ENCODE measurements at regions of chr10 and their contacts with region 1.

Region 1: GRCh38 chr10:110746254-110746826 is 102.2 kb downstream of the RBM20 start:
- DNase-seq: peak; percentile 39
- ATAC-seq: peak; percentile 75
- H3K4me3 Mint-ChIP-seq: no peak overlapping the region
- H3K27ac Mint-ChIP-seq: no peak overlapping the region
- H3K4me1 Mint-ChIP-seq: peaks cover 7% of the 10 kb centered on the region
- H3K27me3 Mint-ChIP-seq: peaks cover 5% of the 10 kb centered on the region
- CTCF ChIP-seq: peak; percentile 40

Region 2: GRCh38 chr10:110871298-110872084 is 125.2 kb after region 1 on chr10 and contains the start of gene PDCD4:
- CTCF ChIA-PET with region 1: interaction called, 3 read pairs
- POLR2A ChIA-PET with region 1: no interaction called
- intact Hi-C with region 1: loop called (anchors 1 kb)
- DNase-seq: peak; percentile 87
- ATAC-seq: peak; percentile 71
- H3K4me3 Mint-ChIP-seq: peak within 1 kb of the TSS; percentile 94
- H3K27ac Mint-ChIP-seq: peak within 1 kb of the TSS; percentile 97
- H3K4me1 Mint-ChIP-seq: peaks cover 76% of the 10 kb centered on the region
- H3K27me3 Mint-ChIP-seq: no peaks in the 10 kb centered on the region
- CTCF ChIP-seq: no peak
- total RNA-seq, gene PDCD4: 143 and 145 TPM in 2 replicates

Region 3: GRCh38 chr10:110893559-110894179 is 147.3 kb after region 1 on chr10:
- CTCF ChIA-PET with region 1: interaction called, 45 read pairs
- POLR2A ChIA-PET with region 1: no interaction called
- intact Hi-C with region 1: loop called (anchors 1 kb)
- DNase-seq: no peak
- ATAC-seq: peak; percentile 93
- H3K4me3 Mint-ChIP-seq: no peak overlapping the region
- H3K27ac Mint-ChIP-seq: no peak overlapping the region
- H3K4me1 Mint-ChIP-seq: peaks cover 22% of the 10 kb centered on the region
- H3K27me3 Mint-ChIP-seq: no peaks in the 10 kb centered on the region
- CTCF ChIP-seq: no peak

Region 4: GRCh38 chr10:110993024-110993693 is 246.8 kb after region 1 on chr10:
- CTCF ChIA-PET with region 1: interaction called, 3 read pairs
- POLR2A ChIA-PET with region 1: no interaction called
- intact Hi-C with region 1: loop called (anchors 5 kb)
- DNase-seq: no peak
- ATAC-seq: no peak
- H3K4me3 Mint-ChIP-seq: no peak overlapping the region
- H3K27ac Mint-ChIP-seq: no peak overlapping the region
- H3K4me1 Mint-ChIP-seq: peaks cover 32% of the 10 kb centered on the region
- H3K27me3 Mint-ChIP-seq: no peaks in the 10 kb centered on the region
- CTCF ChIP-seq: no peak

Region 5: DNA sequence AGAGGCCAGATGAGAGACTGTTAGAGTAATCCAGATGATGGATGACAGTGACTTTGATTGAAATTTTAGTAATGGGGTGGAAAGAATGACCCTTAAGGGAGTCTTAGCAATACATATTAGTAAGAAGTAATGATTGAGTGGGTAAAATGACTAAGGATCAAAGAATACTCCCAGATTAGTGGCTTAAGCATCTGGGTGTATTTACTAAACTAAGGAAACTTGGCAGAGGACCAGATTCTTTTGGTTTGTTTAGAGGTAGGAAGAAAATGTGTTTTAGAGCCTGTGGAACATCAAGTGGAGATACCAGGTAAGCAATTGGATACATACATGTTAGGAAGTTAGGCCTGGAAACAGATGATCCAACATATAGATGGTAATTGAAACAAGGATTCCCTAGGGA is 271.7 kb after region 1 on chr10:
- CTCF ChIA-PET with region 1: no interaction called
- POLR2A ChIA-PET with region 1: no interaction called
- intact Hi-C with region 1: loop called (anchors 5 kb)
- DNase-seq: no peak
- ATAC-seq: no peak
- H3K4me3 Mint-ChIP-seq: no peak overlapping the region
- H3K27ac Mint-ChIP-seq: no peak overlapping the region
- H3K4me1 Mint-ChIP-seq: no peaks in the 10 kb centered on the region
- H3K27me3 Mint-ChIP-seq: no peaks in the 10 kb centered on the region
- CTCF ChIP-seq: no peak

Region 6: GRCh38 chr10:111098679-111099437 is 352.5 kb after region 1 on chr10:
- CTCF ChIA-PET with region 1: no interaction called
- POLR2A ChIA-PET with region 1: no interaction called
- intact Hi-C with region 1: loop called (anchors 1 kb)
- DNase-seq: no peak
- ATAC-seq: no peak
- H3K4me3 Mint-ChIP-seq: no peak overlapping the region
- H3K27ac Mint-ChIP-seq: no peak overlapping the region
- H3K4me1 Mint-ChIP-seq: no peaks in the 10 kb centered on the region
- H3K27me3 Mint-ChIP-seq: peaks cover 14% of the 10 kb centered on the region
- CTCF ChIP-seq: no peak

Region 7: DNA sequence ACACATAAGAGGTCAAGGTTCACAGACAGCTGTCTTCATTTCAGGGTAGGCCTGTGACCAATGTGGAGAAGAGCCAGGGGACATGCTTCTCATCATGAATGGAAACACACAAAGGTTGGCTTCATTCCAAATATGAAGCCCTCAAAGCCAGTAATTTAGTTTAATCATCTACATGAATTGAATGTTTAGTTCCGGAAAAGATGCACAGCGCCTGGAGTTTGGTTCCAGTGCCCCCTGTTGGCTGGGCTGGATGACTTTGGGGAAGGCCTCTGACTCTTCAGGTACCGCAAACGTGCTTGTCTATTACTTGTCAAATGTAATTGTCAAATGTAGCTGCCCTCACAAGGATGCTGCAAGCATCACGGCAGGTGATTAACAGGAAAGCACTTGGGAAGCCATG is 461.2 kb after region 1 on chr10:
- CTCF ChIA-PET with region 1: no interaction called
- POLR2A ChIA-PET with region 1: no interaction called
- intact Hi-C with region 1: no loop called
- DNase-seq: no peak
- ATAC-seq: no peak
- H3K4me3 Mint-ChIP-seq: no peak overlapping the region
- H3K27ac Mint-ChIP-seq: no peak overlapping the region
- H3K4me1 Mint-ChIP-seq: no peaks in the 10 kb centered on the region
- H3K27me3 Mint-ChIP-seq: peaks cover 14% of the 10 kb centered on the region
- CTCF ChIP-seq: no peak

Region 8: DNA sequence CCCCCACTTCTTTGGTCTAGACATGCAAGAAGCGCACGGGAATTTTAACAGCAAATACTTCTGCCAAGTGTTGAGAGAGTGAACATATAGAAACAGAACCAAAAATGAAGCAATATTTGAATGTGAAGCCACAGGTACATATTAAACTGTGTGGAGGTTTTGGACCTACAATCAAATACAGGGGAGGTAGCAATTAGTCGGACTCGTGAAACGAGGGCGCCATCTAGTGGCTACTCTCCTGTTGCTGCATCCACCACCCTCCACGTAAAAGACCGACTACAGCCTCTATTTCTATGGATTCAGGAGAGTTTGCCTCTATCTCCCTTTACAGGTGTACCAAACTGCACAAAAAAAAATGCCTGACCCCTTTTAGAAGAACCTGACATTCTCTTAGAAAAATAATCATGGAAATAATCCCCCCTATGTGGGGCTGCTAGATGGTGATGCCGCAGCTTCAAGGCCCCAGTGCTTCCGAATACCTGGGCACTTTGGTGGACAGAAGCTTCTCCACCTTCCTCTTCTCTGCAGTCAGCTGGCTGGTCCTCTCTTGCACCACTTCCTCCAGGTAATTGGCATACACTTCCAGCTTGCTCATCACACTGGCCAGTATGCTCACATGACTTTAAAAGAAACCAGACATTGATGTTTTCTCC is 1568.6 kb after region 1 on chr10:
- CTCF ChIA-PET with region 1: no interaction called
- POLR2A ChIA-PET with region 1: no interaction called
- intact Hi-C with region 1: loop called (anchors 2 kb)
- DNase-seq: peak; percentile 34
- ATAC-seq: peak; percentile 62
- H3K4me3 Mint-ChIP-seq: no peak overlapping the region
- H3K27ac Mint-ChIP-seq: no peak overlapping the region
- H3K4me1 Mint-ChIP-seq: no peaks in the 10 kb centered on the region
- H3K27me3 Mint-ChIP-seq: peaks cover 12% of the 10 kb centered on the region
- CTCF ChIP-seq: peak; percentile 31

Measured in activated B cell treated with CpG ODN at 0.5 μM for 24 hours (primary cell).